Heart right ventricle (tissue), 16 donors: ENCODE measurements at regions of chr3 and their contacts with region 1.

Region 1: GRCh38 chr3:46496741-46497554 is 828 bp upstream of the RTP3 start:
- DNase-seq: no peak
- ATAC-seq: peak in 2 of 8 donors; percentile 12 to 17
- H3K4me3 ChIP-seq: no peak overlapping the region
- H3K27ac ChIP-seq: no peak overlapping the region
- H3K4me1 ChIP-seq: peaks cover 0 to 30% (median 10%) of the 10 kb centered on the region in 9 donors
- H3K27me3 ChIP-seq: no peaks in the 10 kb centered on the region
- CTCF ChIP-seq: peak in 6 of 9 donors; percentile 12 to 46 (median 28)

Region 2: GRCh38 chr3:46455231-46456095 is 41.5 kb before region 1 on chr3:
- intact Hi-C with region 1: no loop called
- DNase-seq: no peak
- ATAC-seq: peak in 1 of 8 donors; percentile 60
- H3K4me3 ChIP-seq: no peak overlapping the region
- H3K27ac ChIP-seq: no peak overlapping the region
- H3K4me1 ChIP-seq: peaks cover 0 to 2% (median 0%) of the 10 kb centered on the region in 9 donors
- H3K27me3 ChIP-seq: peaks cover 0 to 8% (median 0%) of the 10 kb centered on the region in 7 donors
- CTCF ChIP-seq: no peak

Region 3: DNA sequence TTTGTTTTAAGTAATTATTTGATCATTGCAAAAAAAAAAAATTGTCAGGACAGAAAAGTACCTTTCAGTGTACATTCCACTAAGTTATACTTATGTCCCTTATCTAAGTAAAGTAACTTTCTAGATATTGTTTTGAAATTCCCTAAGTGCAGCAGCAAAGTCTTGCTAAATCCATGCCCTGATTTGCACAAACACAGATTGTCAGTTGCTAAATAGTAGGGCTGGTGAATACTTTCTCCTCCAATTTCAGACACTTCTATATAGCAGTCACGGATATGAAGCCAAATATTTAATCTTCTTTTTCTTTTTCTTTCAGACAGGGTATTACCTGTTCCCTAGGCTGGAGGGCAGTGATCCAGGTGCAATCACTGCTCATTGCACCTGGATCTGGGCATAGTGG is 56.2 kb after region 1 on chr3:
- intact Hi-C with region 1: loop called in 5 of 10 experiments (anchors 5 kb)
- DNase-seq: no peak
- ATAC-seq: no peak
- H3K4me3 ChIP-seq: no peak overlapping the region
- H3K27ac ChIP-seq: no peak overlapping the region
- H3K4me1 ChIP-seq: peaks cover 3 to 26% (median 9%) of the 10 kb centered on the region in 9 donors
- H3K27me3 ChIP-seq: no peaks in the 10 kb centered on the region
- CTCF ChIP-seq: no peak